ENCODE measurements at regions of chr12 and their contacts with region 1.

Region 1: GRCh38 chr12:990661-991349 is at the start of gene ERC1:
- DNase-seq: peak; percentile 88
- H3K4me3 ChIP-seq: peak within 1 kb of the TSS; percentile 87
- H3K27ac ChIP-seq: peak within 1 kb of the TSS; percentile 66
- H3K4me1 ChIP-seq: peaks cover 38% of the 10 kb centered on the region
- CTCF ChIP-seq: peak; percentile 44
- total RNA-seq, gene ERC1: 26.9 and 37.0 TPM in 2 replicates

Region 2: DNA sequence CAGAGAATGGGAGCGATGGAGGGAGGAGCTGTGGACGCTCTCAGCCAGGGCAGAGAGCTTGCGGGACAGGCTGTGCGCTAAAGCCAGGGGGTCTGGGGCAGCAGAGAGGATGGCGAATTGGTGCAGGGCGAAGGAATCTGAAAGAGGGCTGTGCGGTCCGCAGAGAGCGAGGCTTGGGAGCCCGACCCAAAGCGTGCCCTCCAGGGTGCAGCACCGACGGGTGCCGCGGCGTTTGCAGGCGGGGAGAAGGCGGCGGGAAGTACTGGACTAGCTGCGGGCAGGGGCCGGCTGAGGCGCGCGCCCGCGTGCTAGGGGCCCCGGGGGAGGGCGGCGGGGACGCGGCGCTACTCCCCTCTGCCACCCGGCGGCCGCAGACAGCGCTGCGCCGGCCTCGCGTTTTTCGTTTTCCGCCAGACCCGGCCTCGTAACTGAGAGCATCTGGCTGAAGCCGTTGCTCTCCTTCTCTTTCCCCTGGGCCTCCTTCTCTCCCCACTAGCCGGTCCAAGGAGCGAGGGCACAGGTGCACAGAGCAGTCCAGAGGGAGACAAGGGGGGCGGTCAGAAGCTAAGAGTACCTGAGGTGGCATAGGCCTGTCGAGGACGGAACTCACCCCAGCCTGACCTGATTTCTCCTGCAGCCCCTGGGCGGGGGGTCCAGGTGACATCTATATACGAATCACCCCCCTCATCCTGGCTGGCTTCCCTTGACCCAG is 801.7 kb before region 1 on chr12:
- CTCF ChIA-PET with region 1: no interaction called
- POLR2A ChIA-PET with region 1: no interaction called
- intact Hi-C with region 1: no loop called
- DNase-seq: no peak
- H3K4me3 ChIP-seq: no peak overlapping the region
- H3K27ac ChIP-seq: no peak overlapping the region
- H3K4me1 ChIP-seq: no peaks in the 10 kb centered on the region
- CTCF ChIP-seq: no peak

Region 3: DNA sequence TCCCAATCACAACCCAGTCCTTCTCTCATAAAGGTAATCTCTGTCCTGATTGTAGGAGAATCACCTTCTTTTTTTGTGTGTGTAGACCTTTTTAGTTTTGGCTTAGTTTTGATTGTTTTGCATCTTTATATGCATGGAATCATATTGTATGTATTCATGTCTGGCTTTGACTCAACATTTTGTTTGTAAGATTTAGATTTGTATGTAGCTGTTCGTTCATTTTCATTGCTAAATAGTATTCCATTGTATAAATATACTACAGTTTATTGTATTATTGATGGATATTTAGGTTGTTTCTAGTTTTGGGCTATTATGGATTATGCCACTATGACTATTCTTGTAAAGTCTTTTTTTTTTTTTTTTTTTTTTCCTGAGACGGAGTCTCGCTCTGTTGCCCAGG is 10.7 kb after region 1 on chr12:
- CTCF ChIA-PET with region 1: no interaction called
- POLR2A ChIA-PET with region 1: interaction called, 11 read pairs
- intact Hi-C with region 1: no loop called
- DNase-seq: no peak
- H3K4me3 ChIP-seq: no peak overlapping the region
- H3K27ac ChIP-seq: no peak overlapping the region
- H3K4me1 ChIP-seq: peaks cover 29% of the 10 kb centered on the region
- CTCF ChIP-seq: no peak